ENCODE measurements at regions of chr12 and their contacts with region 1.

Region 1: GRCh38 chr12:92078167-92079053 is 67.2 kb downstream of the BTG1 start:
- DNase-seq: no peak
- H3K4me3 Mint-ChIP-seq: no peak overlapping the region
- H3K27ac Mint-ChIP-seq: peak overlapping the region; percentile 45
- H3K4me1 Mint-ChIP-seq: peaks cover 55% of the 10 kb centered on the region
- H3K27me3 Mint-ChIP-seq: no peaks in the 10 kb centered on the region

Region 2: GRCh38 chr12:92047393-92047826 is 31.0 kb before region 1 on chr12:
- intact Hi-C with region 1: loop called (anchors 1 kb)
- DNase-seq: no peak
- H3K4me3 Mint-ChIP-seq: peak overlapping the region; percentile 49
- H3K27ac Mint-ChIP-seq: peak overlapping the region; percentile 75
- H3K4me1 Mint-ChIP-seq: peaks cover 88% of the 10 kb centered on the region
- H3K27me3 Mint-ChIP-seq: no peaks in the 10 kb centered on the region

Region 3: DNA sequence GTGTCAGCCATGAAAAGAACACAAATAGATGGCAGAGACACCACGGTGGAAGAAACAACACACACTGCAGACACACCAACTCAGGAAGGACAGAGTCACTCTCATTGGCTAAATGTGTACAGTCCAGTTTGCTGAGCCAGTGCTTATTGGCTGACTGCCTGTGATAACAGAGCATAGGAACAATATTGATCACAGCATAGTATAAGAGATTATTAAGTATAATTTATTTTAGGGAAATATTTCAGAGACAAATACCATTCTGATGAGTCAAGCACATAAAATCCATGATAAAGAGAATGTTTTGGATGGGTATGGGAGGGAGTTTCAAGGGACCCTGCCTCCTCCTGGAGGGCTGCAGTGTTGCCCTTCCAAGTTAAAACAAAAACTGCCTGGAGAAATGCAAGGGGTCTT is 16.3 kb after region 1 on chr12:
- intact Hi-C with region 1: loop called (anchors 2 kb)
- DNase-seq: no peak
- H3K4me3 Mint-ChIP-seq: no peak overlapping the region
- H3K27ac Mint-ChIP-seq: no peak overlapping the region
- H3K4me1 Mint-ChIP-seq: peaks cover 15% of the 10 kb centered on the region
- H3K27me3 Mint-ChIP-seq: peaks cover 2% of the 10 kb centered on the region